GM10248 (cell line): ENCODE measurements at regions of chr1 and their contacts with region 1.

Region 1: GRCh38 chr1:39469150-39469549 is 22.3 kb upstream of the BMP8A start:
- DNase-seq: no peak
- CTCF ChIP-seq: no peak

Region 2: DNA sequence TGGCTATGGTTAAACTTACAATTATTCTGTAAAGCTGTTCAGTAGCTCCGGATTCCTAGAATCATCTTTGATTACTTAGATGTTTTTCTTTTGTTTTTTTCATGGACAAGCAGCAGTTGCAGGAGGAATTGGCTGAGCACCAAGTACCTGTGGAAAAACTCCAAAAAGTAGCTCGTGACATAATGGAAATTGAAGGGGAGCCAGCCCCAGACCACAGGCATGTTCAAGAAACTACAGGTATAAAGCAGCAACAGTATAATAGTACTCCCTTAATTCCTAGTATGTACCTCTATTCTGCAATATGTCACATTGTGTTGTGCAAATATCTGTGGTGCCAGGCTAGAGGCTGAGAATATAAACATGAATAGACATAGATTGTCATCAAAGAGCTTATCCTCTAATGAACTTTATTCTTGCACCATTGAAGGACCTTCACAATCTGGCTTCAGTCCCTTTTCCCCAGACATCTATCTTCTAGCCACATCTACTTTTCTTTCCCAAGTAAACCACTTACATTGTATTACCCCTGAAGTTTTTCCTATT is 110.1 kb before region 1 on chr1:
- CTCF ChIA-PET with region 1: no interaction called
- POLR2A ChIA-PET with region 1: no interaction called
- DNase-seq: no peak
- CTCF ChIP-seq: no peak

Region 3: DNA sequence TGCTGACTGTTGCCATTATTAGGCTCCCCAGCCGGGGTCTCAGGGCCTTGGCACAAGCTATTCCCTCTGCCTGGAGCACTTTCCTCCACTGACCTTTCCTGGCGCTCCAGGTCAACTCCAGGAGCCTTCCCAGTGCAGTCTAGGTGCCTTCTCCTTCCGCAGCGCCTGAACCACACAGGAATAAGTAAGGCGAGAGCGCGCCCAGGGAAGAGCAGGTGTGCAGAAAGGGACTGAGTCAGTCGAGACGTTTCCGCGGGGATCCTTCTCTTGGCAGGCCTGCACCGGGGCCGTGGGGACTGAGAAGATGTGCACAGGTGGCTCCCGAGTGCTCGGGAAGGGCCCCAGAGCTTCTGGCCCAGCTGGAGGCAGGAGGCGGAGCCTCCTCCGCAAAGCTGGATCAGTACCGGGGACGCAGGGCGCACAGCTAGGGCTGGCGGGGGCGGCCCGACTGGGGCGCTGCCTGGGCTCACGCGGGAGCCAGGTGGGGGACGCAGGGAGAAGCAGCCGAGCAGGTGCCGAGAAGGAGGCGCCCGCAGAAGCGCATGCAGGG is 21.5 kb after region 1 on chr1:
- CTCF ChIA-PET with region 1: interaction called, 18 read pairs
- POLR2A ChIA-PET with region 1: no interaction called
- DNase-seq: no peak
- CTCF ChIP-seq: no peak

Region 4: GRCh38 chr1:39501666-39502065 is 32.5 kb after region 1 on chr1:
- CTCF ChIA-PET with region 1: no interaction called
- POLR2A ChIA-PET with region 1: no interaction called
- DNase-seq: no peak
- CTCF ChIP-seq: no peak